Ascending aorta (tissue), 2 donors: ENCODE measurements at regions of chr3 and their contacts with region 1.

Region 1: DNA sequence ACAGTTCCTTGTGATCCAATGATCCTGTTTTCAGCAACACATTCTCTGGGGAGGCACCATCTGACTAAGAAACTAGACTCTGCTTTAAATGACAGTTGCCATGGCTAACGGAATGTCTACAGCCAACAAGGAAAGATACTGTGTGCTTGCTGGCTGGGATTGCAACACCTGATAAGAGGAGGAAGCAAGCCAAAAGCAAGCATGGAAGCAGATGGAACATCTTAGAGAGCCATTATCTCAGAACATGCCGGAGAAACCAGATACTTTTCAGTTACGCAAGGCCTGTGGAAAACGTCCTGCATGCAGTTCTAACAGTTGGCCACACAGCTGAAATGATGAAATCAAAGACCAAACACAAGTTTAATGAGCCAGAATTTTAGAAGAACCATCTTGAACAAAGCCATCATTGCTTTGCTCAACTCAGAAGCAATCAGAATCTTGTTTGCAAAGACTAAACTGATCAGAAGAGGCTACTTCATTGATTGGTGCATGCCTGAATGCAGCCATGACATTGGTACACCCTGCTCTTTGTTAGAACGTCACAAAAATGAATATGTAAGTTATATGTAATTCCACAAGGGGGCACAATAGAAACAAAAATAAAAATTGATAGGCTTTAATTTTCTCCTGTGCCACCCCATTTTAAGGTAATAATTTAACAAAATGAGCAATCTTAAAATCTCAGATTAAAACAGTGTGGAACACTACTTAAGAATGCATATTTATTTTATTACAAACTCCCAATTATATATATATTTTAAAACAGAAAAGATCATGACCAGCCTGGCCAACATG is 50.8 kb downstream of the GXYLT2 start:
- DNase-seq: peak in 1 of 2 donors; percentile 84
- H3K4me3 ChIP-seq: no peak overlapping the region
- H3K27ac ChIP-seq: peak overlapping the region; percentile 17 to 62
- H3K4me1 ChIP-seq: peaks cover 2 to 11% of the 10 kb centered on the region in 2 donors
- H3K27me3 ChIP-seq: no peaks in the 10 kb centered on the region
- CTCF ChIP-seq: peak in 2 of 3 experiments; percentile 37 to 51

Region 2: GRCh38 chr3:71846185-71846584 is 1092.5 kb before region 1 on chr3:
- intact Hi-C with region 1: no loop called
- DNase-seq: no peak
- H3K4me3 ChIP-seq: no peak overlapping the region
- H3K27ac ChIP-seq: no peak overlapping the region
- H3K4me1 ChIP-seq: no peaks in the 10 kb centered on the region
- H3K27me3 ChIP-seq: no peaks in the 10 kb centered on the region
- CTCF ChIP-seq: no peak

Region 3: GRCh38 chr3:72847751-72848702 is 90.6 kb before region 1 on chr3 and contains the start of gene SHQ1:
- intact Hi-C with region 1: loop called (anchors 5 kb)
- DNase-seq: peak; percentile 82 to 97
- H3K4me3 ChIP-seq: peak within 1 kb of the TSS; percentile 81 to 93
- H3K27ac ChIP-seq: peak within 1 kb of the TSS; percentile 76 to 82
- H3K4me1 ChIP-seq: peaks cover 7 to 9% of the 10 kb centered on the region in 2 donors
- H3K27me3 ChIP-seq: no peaks in the 10 kb centered on the region
- CTCF ChIP-seq: no peak
- total RNA-seq, gene SHQ1: 4.2 TPM

Region 4: DNA sequence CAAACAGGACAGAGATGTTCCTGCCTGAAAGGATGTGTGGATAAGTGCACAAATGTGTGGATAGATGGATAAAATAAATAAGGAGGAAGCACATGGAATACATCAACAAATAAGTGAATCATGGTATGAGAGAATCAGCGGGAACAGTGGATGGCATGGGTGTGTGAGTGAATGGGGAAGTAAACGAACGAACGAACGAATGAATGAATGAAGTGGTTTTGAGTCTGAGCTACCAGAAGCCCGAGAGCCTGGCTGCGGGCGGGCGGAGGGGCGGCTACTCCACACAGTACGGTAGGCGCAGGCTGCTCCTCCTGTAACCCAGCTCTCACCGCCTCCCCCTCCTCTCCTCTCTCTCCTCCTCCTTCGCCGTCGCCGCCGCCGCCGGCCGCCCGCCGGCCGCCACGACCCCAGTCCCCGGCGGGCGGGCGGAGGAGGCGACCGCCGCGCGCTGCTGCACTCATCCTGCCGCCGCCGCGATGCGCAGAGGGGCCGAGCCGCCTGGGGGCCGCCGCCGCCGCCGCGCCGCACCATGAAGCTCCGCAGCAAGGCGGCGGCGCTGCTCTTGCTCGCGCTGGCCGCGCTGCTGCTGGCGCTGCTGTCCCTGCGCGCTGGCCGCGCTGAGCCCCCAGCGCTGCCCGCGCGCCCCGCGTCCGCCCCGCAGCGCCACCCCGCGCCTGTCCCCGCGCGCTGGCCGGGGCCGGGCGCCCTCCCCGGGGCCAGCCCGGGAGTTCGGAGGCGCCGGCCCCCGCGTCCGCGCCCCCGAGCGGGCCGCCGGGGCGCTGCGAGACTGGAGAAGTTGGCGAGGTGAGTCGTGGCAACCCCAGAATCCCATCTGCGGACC is 50.7 kb before region 1 on chr3 and contains the start of gene GXYLT2:
- intact Hi-C with region 1: loop called (anchors 2 kb)
- DNase-seq: peak in 1 of 2 donors; percentile 78
- H3K4me3 ChIP-seq: peak within 1 kb of the TSS; percentile 54 to 80
- H3K27ac ChIP-seq: peak within 1 kb of the TSS; percentile 60 to 89
- H3K4me1 ChIP-seq: peaks cover 3% of the 10 kb centered on the region in 2 donors
- H3K27me3 ChIP-seq: no peaks in the 10 kb centered on the region
- CTCF ChIP-seq: peak in 2 of 3 experiments; percentile 3 to 29
- total RNA-seq, gene GXYLT2: 19.5 TPM

Region 5: DNA sequence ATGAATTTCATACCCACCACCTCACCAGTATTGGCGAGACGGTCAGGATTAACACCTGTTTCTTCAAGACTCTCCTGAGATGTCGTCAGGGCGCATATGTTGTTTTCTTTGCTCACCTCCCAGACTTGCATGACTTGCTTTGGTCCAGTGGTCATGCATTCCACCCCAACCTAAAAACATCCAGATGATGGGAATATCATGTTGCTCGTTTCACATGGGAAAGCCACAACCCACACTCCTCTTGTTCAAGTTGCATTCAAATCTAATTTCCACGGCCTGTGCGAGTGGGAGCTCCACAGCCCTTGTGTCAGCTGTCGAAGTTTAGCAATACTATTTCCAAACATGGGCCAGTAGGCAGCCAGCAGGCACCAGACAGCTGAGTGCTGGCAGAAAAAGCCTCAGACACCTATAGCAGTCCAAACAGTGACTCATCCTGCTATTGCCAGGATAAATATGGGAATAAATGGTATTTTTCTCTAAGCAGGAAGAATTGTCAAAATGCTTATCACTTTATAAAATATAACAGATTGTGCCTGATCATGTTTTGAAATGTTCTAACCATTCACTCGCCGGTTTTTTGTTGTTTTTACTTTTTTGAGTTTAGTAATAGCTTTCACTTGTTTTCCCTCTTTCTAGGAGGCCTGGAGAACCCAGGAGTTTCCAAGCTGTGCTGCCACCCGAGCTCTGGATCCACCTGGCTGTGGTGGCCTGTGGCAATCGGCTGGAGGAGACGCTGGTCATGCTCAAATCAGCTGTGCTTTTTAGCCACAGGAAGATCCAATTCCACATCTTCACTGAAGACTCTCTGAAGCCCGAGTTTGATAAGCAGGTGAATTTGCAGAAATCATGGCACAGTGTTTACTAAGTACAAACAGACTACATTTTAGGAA is 30.7 kb before region 1 on chr3:
- intact Hi-C with region 1: loop called (anchors 2 kb)
- DNase-seq: peak; percentile 33 to 91
- H3K4me3 ChIP-seq: peak overlapping the region in 1 of 2 donors; percentile 34
- H3K27ac ChIP-seq: peak overlapping the region; percentile 80 to 84
- H3K4me1 ChIP-seq: peaks cover 13 to 59% of the 10 kb centered on the region in 2 donors
- H3K27me3 ChIP-seq: no peaks in the 10 kb centered on the region
- CTCF ChIP-seq: no peak

Region 6: DNA sequence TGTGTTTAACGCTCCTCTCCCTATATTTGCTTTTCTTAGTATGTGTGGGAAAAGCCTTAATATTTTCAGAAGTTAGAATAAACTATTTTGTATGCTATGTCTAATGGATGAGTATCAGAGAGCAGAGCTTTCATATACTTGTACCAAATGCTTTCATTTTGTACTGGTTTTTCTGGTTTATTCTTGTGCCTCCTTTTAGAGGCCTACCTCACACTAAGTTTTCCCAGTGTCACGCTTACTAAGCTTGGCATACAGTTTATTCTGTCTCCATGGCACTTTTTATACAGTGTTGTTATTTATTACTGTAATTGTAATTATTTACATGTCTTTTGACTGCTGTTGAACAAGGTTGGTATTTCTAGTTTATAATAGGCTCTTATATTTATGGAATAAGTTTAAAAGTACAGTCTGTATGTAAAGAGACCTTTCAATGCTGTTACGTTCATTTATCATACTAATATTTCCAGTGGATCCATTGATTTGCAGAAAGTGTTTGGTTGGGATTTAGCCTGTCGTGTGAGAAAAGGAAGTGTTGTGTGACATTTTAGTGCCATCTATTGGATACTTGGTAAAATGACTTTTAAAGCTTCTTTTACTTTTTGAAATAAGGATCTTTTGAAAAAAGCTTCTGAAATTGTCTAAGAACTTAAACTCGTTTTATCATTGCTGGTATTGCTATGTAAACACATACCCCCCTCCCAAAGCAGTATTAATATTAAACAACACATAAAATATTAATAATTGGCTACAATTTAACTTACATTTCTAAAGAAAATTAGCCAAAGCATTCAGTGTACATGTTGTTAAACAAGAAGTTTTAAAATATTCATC is 117.6 kb after region 1 on chr3:
- intact Hi-C with region 1: loop called (anchors 2 kb)
- DNase-seq: no peak
- H3K4me3 ChIP-seq: no peak overlapping the region
- H3K27ac ChIP-seq: no peak overlapping the region
- H3K4me1 ChIP-seq: peaks cover 3% of the 10 kb centered on the region in 2 donors
- H3K27me3 ChIP-seq: no peaks in the 10 kb centered on the region
- CTCF ChIP-seq: peak; percentile 44 to 69 (median 45)